ENCODE measurements at regions of chr15 and their contacts with region 1.

Region 1: DNA sequence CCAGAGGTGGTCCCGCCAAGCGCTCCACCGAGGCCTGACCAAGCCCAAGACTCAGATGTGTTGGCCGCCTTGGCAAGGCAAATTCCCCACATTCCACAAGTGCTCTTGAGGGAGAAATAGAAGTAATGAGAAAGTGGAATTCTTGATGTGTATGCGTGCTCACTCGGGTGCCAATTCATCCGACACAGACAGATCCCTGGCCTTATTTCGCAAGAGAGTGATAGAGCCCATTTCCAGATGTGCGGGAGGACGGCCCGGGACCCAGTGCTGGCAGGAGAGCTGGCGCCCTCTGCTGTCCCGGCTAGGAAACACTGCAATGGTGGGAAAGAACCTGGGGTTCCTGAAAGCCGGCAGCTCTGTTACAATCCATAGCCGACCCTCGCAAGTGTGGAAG is 76.0 kb downstream of the HMG20A start:
- DNase-seq: peak; percentile 83 to 85
- H3K4me3 ChIP-seq: no peak overlapping the region
- H3K27ac ChIP-seq: peak overlapping the region; percentile 53 to 78 (median 63)
- H3K4me1 ChIP-seq: peaks cover 32 to 37% of the 10 kb centered on the region in 2 donors
- H3K27me3 ChIP-seq: no peaks in the 10 kb centered on the region
- CTCF ChIP-seq: peak; percentile 72 to 93 (median 85)
- POLR2A ChIP-seq: no peak

Region 2: DNA sequence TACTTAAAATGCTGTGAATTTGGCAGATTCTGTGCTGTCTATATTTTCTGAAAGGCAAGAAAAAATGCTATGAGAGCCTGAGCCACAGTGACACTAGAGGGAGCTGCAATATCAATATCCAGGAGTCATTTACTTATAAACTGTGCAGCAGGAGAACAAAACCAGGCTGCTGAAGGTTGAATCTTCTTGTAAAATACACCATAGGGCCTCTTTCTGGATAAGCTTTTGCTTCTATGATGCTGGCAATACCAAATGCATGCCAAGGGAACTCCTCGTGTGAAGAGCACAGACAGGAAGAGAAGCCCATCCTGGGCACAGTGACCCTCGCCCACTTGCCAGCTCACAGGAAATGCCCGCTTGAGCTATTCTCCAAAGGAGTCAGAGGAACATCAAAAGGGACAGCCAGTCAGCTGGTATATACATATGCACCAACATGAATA is 377.8 kb before region 1 on chr15:
- intact Hi-C with region 1: loop called (anchors 5 kb)
- DNase-seq: peak; percentile 42 to 52
- H3K4me3 ChIP-seq: no peak overlapping the region
- H3K27ac ChIP-seq: no peak overlapping the region
- H3K4me1 ChIP-seq: peaks cover 5 to 6% of the 10 kb centered on the region in 2 donors
- H3K27me3 ChIP-seq: no peaks in the 10 kb centered on the region
- CTCF ChIP-seq: peak; percentile 34 to 81 (median 61)
- POLR2A ChIP-seq: no peak

Region 3: GRCh38 chr15:77419836-77420609 is 76.7 kb before region 1 on chr15 and contains the start of gene PEAK1:
- intact Hi-C with region 1: loop called (anchors 10 kb)
- DNase-seq: peak; percentile 100
- H3K4me3 ChIP-seq: peak within 1 kb of the TSS; percentile 57 to 95 (median 89)
- H3K27ac ChIP-seq: peak within 1 kb of the TSS; percentile 83 to 93 (median 86)
- H3K4me1 ChIP-seq: peaks cover 18 to 30% of the 10 kb centered on the region in 2 donors
- H3K27me3 ChIP-seq: no peaks in the 10 kb centered on the region
- CTCF ChIP-seq: no peak
- POLR2A ChIP-seq: peak; percentile 74 to 92
- total RNA-seq, gene PEAK1: 31.0 to 49.3 (median 35.0) TPM

Region 4: GRCh38 chr15:77959432-77959879 is 462.7 kb after region 1 on chr15:
- intact Hi-C with region 1: no loop called
- DNase-seq: peak; percentile 71 to 80
- H3K4me3 ChIP-seq: no peak overlapping the region
- H3K27ac ChIP-seq: no peak overlapping the region
- H3K4me1 ChIP-seq: peaks cover 0 to 6% of the 10 kb centered on the region in 2 donors
- H3K27me3 ChIP-seq: no peaks in the 10 kb centered on the region
- CTCF ChIP-seq: peak in 5 of 6 experiments; percentile 82 to 94 (median 90)
- POLR2A ChIP-seq: no peak

Measured in thyroid gland (tissue), 4 donors.